A549 (cell line): ENCODE measurements at regions of chr20 and their contacts with region 1.

Region 1: GRCh38 chr20:47356526-47357295 is at the start of gene ZMYND8:
- DNase-seq: peak; percentile 90 to 94
- ATAC-seq: peak; percentile 8 to 45; a peak in 3 of 6 replicates
- H3K4me3 ChIP-seq: peak within 1 kb of the TSS; percentile 7; the same call in 1 of the 3 replicates
- H3K27ac ChIP-seq: peak within 1 kb of the TSS; percentile 100
- H3K4me1 ChIP-seq: peaks cover 98% of the 10 kb centered on the region
- CTCF ChIP-seq: no peak
- EP300 ChIP-seq: no peak
- POLR2A ChIP-seq: no peak
- RAD21 ChIP-seq: no peak
- polyA plus RNA-seq, gene ZMYND8: 23.6 and 24.9 TPM in 2 replicates

Region 2: DNA sequence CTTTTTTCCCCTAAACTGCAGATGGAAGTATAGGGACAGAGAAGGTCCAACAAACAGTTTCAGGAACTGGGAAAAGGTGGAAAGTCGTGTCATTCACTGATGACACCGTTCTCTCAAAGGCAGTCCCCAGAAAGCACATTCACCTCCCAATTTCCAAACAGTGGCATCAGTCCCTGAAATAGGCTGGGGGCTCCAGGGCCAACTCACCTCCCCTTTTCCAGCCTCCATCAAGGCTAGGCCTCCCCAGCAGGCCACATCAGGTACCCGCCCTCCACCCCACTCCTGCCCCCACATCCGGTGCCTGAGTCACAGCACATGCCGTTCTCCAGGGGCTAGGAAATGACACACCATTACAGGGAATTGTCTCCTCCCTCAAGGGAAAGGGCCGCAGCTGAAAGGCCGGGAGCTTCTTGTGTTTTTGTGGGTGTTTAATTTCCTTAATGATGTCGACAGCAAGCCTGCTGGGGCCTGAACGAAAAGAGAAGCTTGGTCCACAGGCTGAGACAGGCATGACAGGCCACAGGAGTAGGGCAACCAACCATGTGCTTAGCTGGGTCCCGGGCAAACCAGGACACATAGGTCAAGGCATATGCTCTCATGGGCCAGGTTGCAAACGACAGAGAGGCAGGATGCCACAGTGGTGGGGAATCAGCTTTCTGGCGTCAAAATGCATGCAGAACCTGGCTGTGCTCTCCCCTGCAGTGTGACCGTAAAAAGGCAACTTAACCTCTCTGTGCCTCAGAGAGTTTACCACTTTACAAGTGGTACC is 39.4 kb before region 1 on chr20:
- CTCF ChIA-PET with region 1: interaction called, 6 read pairs
- POLR2A ChIA-PET with region 1: interaction called, 33 read pairs
- DNase-seq: peak; percentile 71 to 82
- ATAC-seq: peak in 1 of 2 experiments; percentile 20; a peak in 2 of 6 replicates
- H3K4me3 ChIP-seq: no peak overlapping the region
- H3K27ac ChIP-seq: peak overlapping the region; percentile 94 to 97
- H3K4me1 ChIP-seq: peaks cover 89% of the 10 kb centered on the region
- CTCF ChIP-seq: no peak
- EP300 ChIP-seq: no peak
- POLR2A ChIP-seq: no peak
- RAD21 ChIP-seq: no peak

Region 3: DNA sequence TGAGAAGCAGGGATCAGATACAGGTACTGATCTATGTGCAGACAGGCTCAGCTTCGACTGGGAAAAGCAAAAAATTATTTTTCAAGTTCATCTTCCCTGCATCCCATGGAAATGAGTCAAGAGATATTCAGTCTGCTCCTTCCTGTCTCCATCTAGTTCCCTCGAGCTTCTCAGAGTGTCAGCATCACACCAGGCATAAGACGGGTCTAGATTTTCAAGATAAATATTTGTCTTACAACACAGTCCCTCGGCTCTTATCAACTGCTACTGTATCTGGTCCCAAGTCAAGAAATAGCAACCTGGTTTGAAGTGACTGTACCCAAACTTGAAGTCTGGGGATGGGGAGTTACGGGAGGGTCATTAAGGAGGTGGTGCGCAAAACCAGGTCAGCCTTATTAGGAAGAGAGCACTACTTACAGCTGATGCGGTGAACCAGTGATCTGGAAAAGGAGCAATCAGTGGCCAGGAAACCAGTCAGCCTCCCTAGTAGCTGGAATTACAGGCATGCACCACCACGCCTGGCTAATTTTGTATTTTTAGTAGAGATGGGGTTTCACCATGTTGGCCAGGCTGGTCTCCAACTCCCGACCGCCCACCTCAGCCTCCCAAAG is 29.9 kb before region 1 on chr20:
- CTCF ChIA-PET with region 1: interaction called, 5 read pairs
- POLR2A ChIA-PET with region 1: interaction called, 11 read pairs
- DNase-seq: peak in 1 of 2 experiments; percentile 74
- ATAC-seq: peak in 1 of 2 experiments; percentile 43; a peak in 3 of 6 replicates
- H3K4me3 ChIP-seq: no peak overlapping the region
- H3K27ac ChIP-seq: peak overlapping the region; percentile 94 to 97
- H3K4me1 ChIP-seq: peaks cover 92% of the 10 kb centered on the region
- CTCF ChIP-seq: no peak
- EP300 ChIP-seq: no peak
- POLR2A ChIP-seq: no peak
- RAD21 ChIP-seq: no peak